B cell (primary cell): ENCODE measurements at regions of chr19 and their contacts with region 1.

Region 1: GRCh38 chr19:17156927-17157302 is 58.2 kb upstream of the USE1 start:
- DNase-seq: peak; percentile 35
- ATAC-seq: peak; percentile 31
- H3K4me3 ChIP-seq: no peak overlapping the region
- H3K4me3 Mint-ChIP-seq: no peak overlapping the region
- H3K27ac ChIP-seq: no peak overlapping the region
- H3K27ac Mint-ChIP-seq: no peak overlapping the region
- H3K4me1 ChIP-seq: no peaks in the 10 kb centered on the region
- H3K4me1 Mint-ChIP-seq: no peaks in the 10 kb centered on the region
- H3K27me3 ChIP-seq: no peaks in the 10 kb centered on the region
- H3K27me3 Mint-ChIP-seq: no peaks in the 10 kb centered on the region
- CTCF ChIP-seq: no peak

Region 2: DNA sequence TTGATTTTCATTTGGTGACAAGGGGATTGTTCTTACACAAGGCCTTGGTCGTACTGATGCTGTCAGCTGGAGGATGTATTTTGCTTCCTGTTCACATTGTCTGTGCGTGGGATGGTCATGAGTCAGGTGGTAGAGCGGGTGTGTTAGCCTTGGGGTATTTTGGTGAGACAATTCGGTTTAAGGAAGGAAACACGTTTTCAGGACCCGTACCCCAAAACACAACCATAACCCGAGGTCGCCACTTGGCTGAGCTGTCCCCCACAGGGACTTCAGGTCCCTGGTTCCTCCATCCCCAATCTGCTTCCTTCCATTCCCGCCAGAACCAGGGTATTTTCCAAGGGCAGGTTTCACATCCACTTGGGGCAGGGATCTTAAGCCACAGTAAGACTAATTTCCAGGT is 66.3 kb before region 1 on chr19:
- CTCF ChIA-PET with region 1: interaction called, 5 read pairs
- POLR2A ChIA-PET with region 1: interaction called, 10 read pairs
- intact Hi-C with region 1: no loop called
- DNase-seq: peak; percentile 84
- ATAC-seq: peak; percentile 73
- H3K4me3 ChIP-seq: peak overlapping the region in 1 of 5 experiments; percentile 1
- H3K4me3 Mint-ChIP-seq: peak overlapping the region; percentile 48
- H3K27ac ChIP-seq: peak overlapping the region; percentile 82 to 88
- H3K27ac Mint-ChIP-seq: peak overlapping the region; percentile 47
- H3K4me1 ChIP-seq: peaks cover 36 to 46% of the 10 kb centered on the region in 2 donors
- H3K4me1 Mint-ChIP-seq: peaks cover 57% of the 10 kb centered on the region
- H3K27me3 ChIP-seq: no peaks in the 10 kb centered on the region
- H3K27me3 Mint-ChIP-seq: no peaks in the 10 kb centered on the region
- CTCF ChIP-seq: no peak